ENCODE measurements at regions of chr11 and their contacts with region 1.

Region 1: GRCh38 chr11:73625696-73626318 is 20.6 kb upstream of the PLEKHB1 start:
- DNase-seq: peak; percentile 93
- ATAC-seq: peak; percentile 93
- H3K4me3 ChIP-seq: peak overlapping the region; percentile 59
- H3K27ac ChIP-seq: no peak overlapping the region
- H3K4me1 ChIP-seq: peaks cover 5% of the 10 kb centered on the region; the same call in 1 of the 2 replicates
- H3K27me3 ChIP-seq: no peaks in the 10 kb centered on the region
- CTCF ChIP-seq: peak; percentile 92

Region 2: GRCh38 chr11:73647459-73648100 is 21.8 kb after region 1 on chr11:
- CTCF ChIA-PET with region 1: interaction called, 11 read pairs
- POLR2A ChIA-PET with region 1: interaction called, 3 read pairs
- intact Hi-C with region 1: no loop called
- DNase-seq: peak; percentile 92
- ATAC-seq: peak; percentile 97
- H3K4me3 ChIP-seq: peak overlapping the region; percentile 47
- H3K27ac ChIP-seq: no peak overlapping the region
- H3K4me1 ChIP-seq: peaks cover 5% of the 10 kb centered on the region
- H3K27me3 ChIP-seq: no peaks in the 10 kb centered on the region
- CTCF ChIP-seq: no peak